Activated CD4-positive, alpha-beta T cell treated with anti-CD3 and anti-CD28 coated beads, Interleukin-2, amount 10 ng/mL, durations not matched to agents 24 days and 14 days (primary cell): ENCODE measurements at regions of chr1 and their contacts with region 1.

Region 1: GRCh38 chr1:28779751-28780408 is 32.1 kb upstream of the OPRD1 start:
- DNase-seq: no peak
- H3K4me3 Mint-ChIP-seq: no peak overlapping the region
- H3K27ac Mint-ChIP-seq: no peak overlapping the region
- H3K4me1 Mint-ChIP-seq: peaks cover 2% of the 10 kb centered on the region
- H3K27me3 Mint-ChIP-seq: peaks cover 13% of the 10 kb centered on the region

Region 2: DNA sequence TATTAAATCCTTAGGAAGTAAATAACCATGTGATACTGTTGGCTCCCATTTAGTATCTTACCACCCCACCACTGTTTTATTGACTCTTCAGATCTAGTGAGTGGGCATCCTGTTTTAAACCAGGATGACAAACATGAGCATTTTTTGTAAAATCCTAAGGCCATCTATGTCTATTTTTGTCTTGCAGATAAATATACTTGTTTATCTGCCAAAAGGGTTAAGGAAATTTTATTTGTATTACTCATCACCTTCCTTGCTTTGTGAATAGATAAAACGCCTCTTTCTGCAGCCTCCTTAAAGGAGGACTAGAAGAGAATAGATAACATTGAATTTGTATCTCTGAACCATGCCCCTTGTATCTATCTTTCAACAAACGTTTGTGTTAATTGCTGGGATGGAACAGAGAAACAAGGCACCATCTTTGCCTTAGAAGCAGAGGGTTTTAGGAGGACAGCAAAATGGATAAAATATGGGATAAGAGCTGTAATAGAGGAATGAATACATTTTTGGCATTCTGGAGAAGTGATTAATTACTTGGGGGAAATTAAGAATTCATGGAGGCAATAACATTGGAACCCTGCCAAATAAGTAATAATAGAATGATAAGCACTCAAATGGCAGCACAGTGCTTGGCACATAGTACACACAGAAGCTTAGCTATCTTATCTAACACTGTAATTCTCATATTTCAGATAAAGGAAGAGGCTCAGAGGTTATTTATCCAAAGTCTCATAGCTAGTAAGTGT is 28.4 kb before region 1 on chr1:
- intact Hi-C with region 1: no loop called
- DNase-seq: no peak
- H3K4me3 Mint-ChIP-seq: no peak overlapping the region
- H3K27ac Mint-ChIP-seq: no peak overlapping the region
- H3K4me1 Mint-ChIP-seq: peaks cover 31% of the 10 kb centered on the region
- H3K27me3 Mint-ChIP-seq: no peaks in the 10 kb centered on the region

Region 3: GRCh38 chr1:28815533-28816185 is 35.8 kb after region 1 on chr1:
- intact Hi-C with region 1: no loop called
- DNase-seq: peak; percentile 65
- H3K4me3 Mint-ChIP-seq: no peak overlapping the region
- H3K27ac Mint-ChIP-seq: no peak overlapping the region
- H3K4me1 Mint-ChIP-seq: peaks cover 2% of the 10 kb centered on the region
- H3K27me3 Mint-ChIP-seq: peaks cover 46% of the 10 kb centered on the region

Region 4: DNA sequence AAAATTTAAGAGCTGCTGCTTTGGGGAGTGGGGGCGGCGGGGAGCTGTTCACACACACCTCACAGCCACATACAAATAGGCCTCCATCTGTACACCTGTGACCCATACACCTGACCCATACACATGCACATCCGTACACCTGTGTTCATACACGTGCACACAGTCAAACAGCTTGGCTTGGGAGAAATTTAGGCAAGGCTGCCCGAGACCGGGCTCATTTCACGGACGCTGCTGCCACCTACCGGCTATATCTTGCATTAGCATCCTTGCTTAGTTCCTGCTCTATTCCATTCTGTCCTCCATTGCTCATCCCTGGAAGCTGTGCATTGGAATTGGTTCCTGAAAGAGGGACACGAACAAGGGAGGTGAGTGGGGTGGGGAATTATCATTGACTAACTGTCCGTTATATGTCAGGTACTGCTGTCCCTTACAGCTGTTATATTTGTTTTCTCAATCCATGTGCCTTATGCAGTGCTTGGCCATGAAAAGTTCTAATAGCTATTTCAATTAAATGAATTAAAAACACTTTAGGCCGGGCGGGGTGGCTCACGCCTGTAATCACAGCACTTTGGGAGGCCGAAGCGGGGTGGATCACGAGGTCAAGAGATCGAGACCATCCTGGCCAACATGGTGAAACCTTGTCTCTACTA is 97.4 kb after region 1 on chr1:
- intact Hi-C with region 1: loop called (anchors 1 kb)
- DNase-seq: peak; percentile 93
- H3K4me3 Mint-ChIP-seq: no peak overlapping the region
- H3K27ac Mint-ChIP-seq: no peak overlapping the region
- H3K4me1 Mint-ChIP-seq: peaks cover 10% of the 10 kb centered on the region
- H3K27me3 Mint-ChIP-seq: peaks cover 15% of the 10 kb centered on the region

Region 5: GRCh38 chr1:29033829-29034466 is 254.1 kb after region 1 on chr1:
- intact Hi-C with region 1: loop called (anchors 1 kb)
- DNase-seq: peak; percentile 60
- H3K4me3 Mint-ChIP-seq: no peak overlapping the region
- H3K27ac Mint-ChIP-seq: no peak overlapping the region
- H3K4me1 Mint-ChIP-seq: no peaks in the 10 kb centered on the region
- H3K27me3 Mint-ChIP-seq: no peaks in the 10 kb centered on the region